ENCODE measurements at regions of chr6 and their contacts with region 1.

Region 1: DNA sequence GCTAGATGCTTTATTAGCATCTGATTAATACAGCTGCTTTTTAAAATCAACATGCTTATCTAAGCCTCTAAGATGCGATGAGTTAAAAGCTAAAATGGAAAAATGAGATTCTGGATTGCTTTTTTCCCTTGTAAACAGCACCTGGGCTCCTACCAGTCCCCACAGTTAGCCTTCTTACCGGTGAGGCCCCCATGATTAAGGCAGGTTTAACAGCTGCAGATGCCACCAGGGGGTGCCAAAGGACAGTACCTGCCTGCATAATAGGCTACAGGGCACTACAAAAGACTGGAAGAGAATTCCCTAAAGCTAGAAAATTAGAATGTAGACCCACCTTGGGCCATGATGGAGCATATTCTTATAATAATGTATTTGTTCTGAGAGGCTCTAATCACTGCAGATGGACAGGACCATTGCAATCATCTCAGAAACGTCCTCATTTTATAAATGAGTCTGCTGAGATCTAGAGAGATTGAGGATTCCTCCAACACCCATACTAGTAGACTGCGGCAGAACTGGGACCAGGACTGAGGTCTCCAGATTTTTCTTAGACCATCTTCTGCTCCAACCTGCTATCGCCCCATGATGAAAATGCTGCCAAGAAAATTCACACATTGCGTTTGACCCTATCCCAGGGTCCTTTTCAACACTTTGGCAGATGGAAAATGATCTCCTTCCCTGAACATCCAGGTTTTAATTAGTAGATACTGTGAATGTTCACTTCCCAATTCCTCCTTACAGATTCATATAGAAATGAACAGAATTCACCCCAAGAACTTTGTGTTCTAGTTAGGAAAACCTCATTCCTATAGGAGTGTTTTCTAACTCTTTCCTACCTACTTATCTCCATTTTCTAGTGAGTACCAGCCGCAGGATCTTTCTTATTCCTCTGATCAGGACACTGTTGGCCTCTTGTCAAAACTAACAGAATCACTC is 148.8 kb downstream of the RPS12 start:
- DNase-seq: peak; percentile 65 to 82
- ATAC-seq: peak; percentile 66 to 95 (median 86)
- H3K4me3 ChIP-seq: no peak overlapping the region
- H3K27ac ChIP-seq: peak overlapping the region; percentile 67
- H3K4me1 ChIP-seq: peaks cover 26% of the 10 kb centered on the region
- H3K27me3 ChIP-seq: no peaks in the 10 kb centered on the region
- CTCF ChIP-seq: peak; percentile 89

Region 2: GRCh38 chr6:132780770-132781371 is 182.3 kb before region 1 on chr6:
- intact Hi-C with region 1: no loop called
- DNase-seq: no peak
- ATAC-seq: no peak
- H3K4me3 ChIP-seq: no peak overlapping the region
- H3K27ac ChIP-seq: no peak overlapping the region
- H3K4me1 ChIP-seq: no peaks in the 10 kb centered on the region
- H3K27me3 ChIP-seq: no peaks in the 10 kb centered on the region
- CTCF ChIP-seq: no peak

Region 3: GRCh38 chr6:132995432-132995831 is 32.2 kb after region 1 on chr6:
- intact Hi-C with region 1: loop called in 1 of 2 experiments (anchors 2 kb)
- DNase-seq: peak; percentile 61 to 88
- ATAC-seq: peak; percentile 98 to 100 (median 99)
- H3K4me3 ChIP-seq: peak overlapping the region; percentile 35
- H3K27ac ChIP-seq: peak overlapping the region; percentile 85
- H3K4me1 ChIP-seq: peaks cover 22% of the 10 kb centered on the region
- H3K27me3 ChIP-seq: no peaks in the 10 kb centered on the region
- CTCF ChIP-seq: no peak

Region 4: DNA sequence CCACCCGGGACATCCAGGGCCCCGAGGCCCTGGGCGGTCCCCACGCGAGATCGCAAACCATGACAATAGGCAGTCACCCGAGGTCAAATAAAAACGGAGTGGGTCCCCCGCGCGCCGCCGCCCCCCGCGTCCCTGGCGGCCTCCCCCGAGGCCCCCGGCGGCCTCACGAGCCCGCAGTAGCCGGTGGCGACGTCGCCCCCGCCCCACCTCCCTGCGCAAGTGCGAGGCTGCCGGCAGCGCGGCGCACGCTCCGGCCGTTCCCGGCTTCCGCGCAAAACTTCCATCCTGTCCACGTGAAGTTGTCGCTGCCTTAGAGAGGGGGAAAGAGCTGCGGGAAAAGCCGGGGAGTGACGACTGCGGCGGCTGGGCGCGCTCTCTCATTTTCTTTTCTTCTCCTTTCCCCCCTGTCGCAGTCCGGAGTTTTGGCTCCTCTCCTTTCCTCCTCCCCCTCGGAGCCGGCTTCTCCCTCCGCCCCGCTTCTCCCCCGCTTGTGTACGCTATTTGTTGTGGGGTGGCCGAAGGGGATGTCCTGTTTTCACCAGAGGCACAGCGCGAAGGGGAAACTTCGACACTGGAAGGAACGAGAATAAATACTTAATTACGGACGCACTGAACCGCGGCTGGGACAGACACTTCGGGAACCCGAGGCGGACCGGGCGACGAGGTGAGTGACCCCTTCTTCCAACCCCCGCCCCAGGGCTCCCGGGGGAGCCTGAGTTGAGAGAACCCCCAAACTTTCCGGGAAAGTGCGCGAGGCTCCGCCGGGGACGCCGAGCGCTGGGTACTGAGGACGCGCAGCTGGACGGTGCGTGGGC is 278.1 kb after region 1 on chr6 and contains the start of gene EYA4:
- intact Hi-C with region 1: loop called in 1 of 2 experiments (anchors 1 kb)
- DNase-seq: peak; percentile 60 to 85
- ATAC-seq: peak; percentile 65 to 80 (median 70)
- H3K4me3 ChIP-seq: peak within 1 kb of the TSS; percentile 93
- H3K27ac ChIP-seq: peak within 1 kb of the TSS; percentile 99
- H3K4me1 ChIP-seq: peaks cover 24% of the 10 kb centered on the region
- H3K27me3 ChIP-seq: no peaks in the 10 kb centered on the region
- CTCF ChIP-seq: no peak
- total RNA-seq, gene EYA4: 32.8 to 48.3 (median 37.4) TPM

Region 5: GRCh38 chr6:133512410-133513016 is 549.3 kb after region 1 on chr6:
- intact Hi-C with region 1: loop called in 1 of 2 experiments (anchors 10 kb)
- DNase-seq: peak in 1 of 2 donors; percentile 26
- ATAC-seq: peak in 2 of 4 donors; percentile 73
- H3K4me3 ChIP-seq: no peak overlapping the region
- H3K27ac ChIP-seq: no peak overlapping the region
- H3K4me1 ChIP-seq: no peaks in the 10 kb centered on the region
- H3K27me3 ChIP-seq: no peaks in the 10 kb centered on the region
- CTCF ChIP-seq: peak; percentile 54

Measured in psoas muscle (tissue), 8 donors.